ENCODE measurements at regions of chr18 and their contacts with region 1.

Region 1: GRCh38 chr18:8988261-8988871 is 114.1 kb upstream of the NDUFV2 start:
- DNase-seq: peak in 1 of 2 donors; percentile 36
- ATAC-seq: peak; percentile 35 to 53
- H3K4me3 ChIP-seq: no peak overlapping the region
- H3K27ac ChIP-seq: no peak overlapping the region
- H3K4me1 ChIP-seq: peaks cover 0 to 5% of the 10 kb centered on the region in 2 donors
- H3K27me3 ChIP-seq: no peaks in the 10 kb centered on the region
- CTCF ChIP-seq: peak; percentile 46 to 77 (median 63)
- POLR2A ChIP-seq: no peak

Region 2: DNA sequence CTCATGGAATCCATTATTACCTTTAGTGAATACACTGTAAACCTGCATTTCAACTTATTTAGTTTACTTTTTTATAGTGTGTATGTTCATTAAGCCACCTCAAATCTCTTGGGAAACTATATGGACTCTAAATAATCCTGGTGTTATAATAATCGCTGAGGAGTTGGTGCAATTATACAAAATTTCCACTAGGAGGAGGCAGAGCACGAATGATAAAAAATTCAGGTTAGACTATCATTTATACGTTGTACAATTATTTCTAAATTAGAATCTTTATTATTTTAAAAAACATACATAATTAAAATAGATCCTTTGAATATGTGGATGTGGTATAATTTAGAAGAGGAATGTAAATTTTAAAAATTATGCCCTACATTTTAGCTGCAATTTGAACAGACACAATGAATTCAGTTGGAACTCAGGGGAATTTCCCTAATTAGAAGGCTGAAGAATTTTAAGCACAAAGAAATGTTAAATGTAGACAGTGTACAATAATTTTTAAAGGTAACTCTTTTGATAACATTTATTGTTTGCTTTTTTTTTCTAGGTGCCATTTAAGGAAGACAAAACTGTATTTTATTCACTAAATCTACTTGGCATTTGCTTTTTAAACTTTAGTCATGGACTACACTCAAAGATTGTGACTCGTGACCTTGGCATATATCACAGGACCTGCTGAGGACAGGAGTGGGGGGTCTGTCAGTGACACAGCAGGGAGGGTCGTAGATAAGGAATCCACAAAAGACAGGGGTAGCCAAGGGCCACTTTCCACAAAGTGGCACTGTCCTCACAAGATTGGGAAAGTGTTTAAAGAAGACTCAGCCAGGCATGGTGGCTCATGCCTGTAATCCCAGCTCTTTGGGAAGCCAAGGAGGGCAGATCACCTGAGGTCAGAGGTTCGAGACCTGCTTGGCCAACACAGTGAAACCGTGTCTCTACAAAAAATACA is 333.6 kb before region 1 on chr18:
- in situ Hi-C with region 1: no loop called
- intact Hi-C with region 1: loop called (anchors 1 kb)
- DNase-seq: no peak
- ATAC-seq: peak; percentile 62
- H3K4me3 ChIP-seq: no peak overlapping the region
- H3K27ac ChIP-seq: no peak overlapping the region
- H3K4me1 ChIP-seq: no peaks in the 10 kb centered on the region
- H3K27me3 ChIP-seq: no peaks in the 10 kb centered on the region
- CTCF ChIP-seq: peak; percentile 55 to 84 (median 78)
- POLR2A ChIP-seq: no peak

Region 3: GRCh38 chr18:8696749-8697211 is 291.6 kb before region 1 on chr18:
- in situ Hi-C with region 1: loop called in 3 of 4 experiments (anchors 5 to 10 kb)
- intact Hi-C with region 1: loop called (anchors 1 kb)
- DNase-seq: peak; percentile 43 to 73
- ATAC-seq: peak; percentile 90 to 98
- H3K4me3 ChIP-seq: no peak overlapping the region
- H3K27ac ChIP-seq: no peak overlapping the region
- H3K4me1 ChIP-seq: no peaks in the 10 kb centered on the region
- H3K27me3 ChIP-seq: no peaks in the 10 kb centered on the region
- CTCF ChIP-seq: peak; percentile 66 to 94 (median 87)
- POLR2A ChIP-seq: no peak

Region 4: DNA sequence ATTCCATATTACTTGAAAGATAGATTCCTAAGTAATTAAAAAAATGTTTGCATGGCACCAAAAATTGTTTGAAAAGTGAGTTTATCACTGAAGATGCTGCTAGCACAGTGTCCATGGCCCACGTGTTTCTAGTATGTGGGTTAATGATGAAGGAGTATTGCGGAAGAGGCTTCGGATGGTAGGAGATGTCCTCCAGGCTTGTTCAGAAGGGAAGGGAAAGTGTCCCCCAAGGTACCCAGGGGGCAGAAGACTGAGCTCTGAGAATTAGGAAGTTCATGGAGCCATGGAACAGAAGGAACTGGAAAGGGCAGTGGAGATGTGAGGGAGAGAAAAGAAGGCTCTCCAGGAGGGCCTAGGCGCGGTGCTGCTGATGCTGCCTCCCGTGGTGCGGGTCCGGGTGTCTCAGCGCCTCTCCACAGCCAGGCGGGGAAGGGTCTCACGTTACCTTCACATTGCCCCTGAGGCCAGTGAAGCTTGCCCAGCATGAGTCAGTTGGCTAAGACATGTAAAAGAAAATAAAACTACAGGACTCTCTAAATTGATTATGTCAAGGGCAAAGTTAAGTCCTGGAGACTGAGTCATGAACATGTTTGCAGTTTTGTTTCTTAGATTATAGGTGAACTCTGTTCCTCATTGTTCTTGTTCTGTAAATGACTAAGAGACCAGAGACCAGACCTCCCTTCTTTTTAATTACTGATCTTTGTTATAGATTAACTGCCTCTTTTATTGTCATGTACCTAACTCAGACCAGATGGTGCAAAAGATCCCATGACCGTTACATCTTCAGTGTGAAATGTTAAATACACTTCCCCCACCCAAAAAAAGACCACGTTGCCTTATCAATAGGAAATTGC is 194.0 kb before region 1 on chr18:
- in situ Hi-C with region 1: no loop called
- intact Hi-C with region 1: loop called (anchors 10 kb)
- DNase-seq: no peak
- ATAC-seq: no peak
- H3K4me3 ChIP-seq: no peak overlapping the region
- H3K27ac ChIP-seq: no peak overlapping the region
- H3K4me1 ChIP-seq: peaks cover 5 to 9% of the 10 kb centered on the region in 2 donors
- H3K27me3 ChIP-seq: no peaks in the 10 kb centered on the region
- CTCF ChIP-seq: no peak
- POLR2A ChIP-seq: no peak

Region 5: DNA sequence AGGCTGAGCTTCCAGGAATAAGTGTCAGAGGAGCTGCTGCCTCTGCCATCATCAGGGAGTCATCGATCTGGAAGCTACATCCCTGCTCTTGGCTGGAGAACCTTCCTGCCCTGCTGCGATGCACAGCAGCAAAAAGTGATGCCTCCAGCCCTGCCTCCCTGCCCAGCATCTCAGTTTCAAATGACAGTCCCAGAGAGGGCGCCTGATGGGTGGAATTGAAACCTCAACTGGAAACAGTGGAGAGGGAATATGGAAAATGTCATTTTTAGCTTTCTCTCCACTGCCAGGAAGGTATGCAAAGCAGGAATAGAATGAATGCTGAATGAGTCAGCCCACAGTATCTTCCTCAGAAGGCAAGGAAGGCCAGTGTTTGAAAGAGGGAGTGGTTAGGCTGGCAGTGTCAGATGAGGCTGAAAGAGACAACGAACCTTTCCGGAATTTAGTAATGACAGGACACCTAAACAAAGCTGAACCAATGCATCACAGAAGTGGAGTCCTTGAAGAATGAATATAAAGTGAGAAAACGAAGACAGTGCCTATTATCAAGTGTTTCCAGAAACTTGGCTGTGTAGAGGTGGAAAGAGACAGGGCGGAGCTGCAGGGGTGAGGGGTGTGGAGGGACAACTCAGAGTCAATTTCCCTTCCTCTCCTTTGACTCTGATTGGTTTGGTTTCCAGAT is 39.8 kb before region 1 on chr18:
- in situ Hi-C with region 1: no loop called
- intact Hi-C with region 1: no loop called
- DNase-seq: no peak
- ATAC-seq: no peak
- H3K4me3 ChIP-seq: no peak overlapping the region
- H3K27ac ChIP-seq: no peak overlapping the region
- H3K4me1 ChIP-seq: peaks cover 0 to 4% of the 10 kb centered on the region in 2 donors
- H3K27me3 ChIP-seq: peaks cover 0 to 7% (median 0%) of the 10 kb centered on the region in 3 donors
- CTCF ChIP-seq: no peak
- POLR2A ChIP-seq: no peak

Measured in gastrocnemius medialis (tissue), 4 donors.